ENCODE measurements at regions of chr22 and their contacts with region 1.

Region 1: DNA sequence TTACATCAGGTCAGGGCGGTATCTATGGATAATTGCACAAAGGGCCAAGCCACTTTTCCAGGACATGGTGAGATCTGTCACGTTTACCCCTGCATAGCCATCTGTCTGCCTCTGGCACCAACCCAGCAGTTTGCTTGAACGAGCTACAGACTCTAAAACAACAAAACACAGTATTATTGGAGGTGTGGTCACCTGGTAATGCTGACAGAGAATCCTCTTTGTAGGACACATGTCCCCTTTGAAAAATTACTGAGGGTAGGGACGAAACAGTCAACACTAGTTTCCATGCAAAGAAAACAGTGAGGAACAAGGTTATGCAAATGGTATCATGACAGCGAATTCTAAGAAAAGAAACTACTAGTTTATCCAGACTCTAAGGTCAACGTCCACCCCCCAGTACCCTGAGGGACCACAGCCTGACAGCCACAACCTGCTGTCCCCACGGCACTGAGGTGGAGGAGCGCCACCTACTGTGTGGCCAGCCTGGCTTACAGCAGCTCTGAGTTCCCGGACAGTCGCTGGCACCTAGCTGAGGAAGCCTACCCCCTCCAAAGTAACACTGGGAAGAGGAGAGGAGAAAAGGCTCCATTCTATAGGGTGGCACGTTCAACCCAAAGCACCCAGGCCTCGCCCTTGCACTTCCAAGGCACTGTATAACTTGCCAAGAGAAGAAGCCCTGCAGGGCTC is 117.4 kb upstream of the BID start:
- DNase-seq: peak; percentile 15
- H3K4me3 Mint-ChIP-seq: no peak overlapping the region
- H3K27ac Mint-ChIP-seq: no peak overlapping the region
- H3K4me1 Mint-ChIP-seq: no peaks in the 10 kb centered on the region
- H3K27me3 Mint-ChIP-seq: no peaks in the 10 kb centered on the region

Region 2: GRCh38 chr22:18024276-18024947 is 132.8 kb after region 1 on chr22 and contains the start of gene MICAL3:
- CTCF ChIA-PET with region 1: no interaction called
- intact Hi-C with region 1: loop called (anchors 10 kb)
- DNase-seq: peak; percentile 63
- H3K4me3 Mint-ChIP-seq: peak within 1 kb of the TSS; percentile 84
- H3K27ac Mint-ChIP-seq: no peak within 1 kb of the TSS
- H3K4me1 Mint-ChIP-seq: peaks cover 10% of the 10 kb centered on the region
- H3K27me3 Mint-ChIP-seq: peaks cover 27% of the 10 kb centered on the region
- total RNA-seq, gene MICAL3: 21.0 to 25.8 TPM